ENCODE measurements at regions of chr6 and their contacts with region 1.

Region 1: GRCh38 chr6:38493931-38494547 is 145.7 kb downstream of the BTBD9 start:
- DNase-seq: peak; percentile 52
- ATAC-seq: peak; percentile 69
- H3K4me3 ChIP-seq: no peak overlapping the region
- H3K27ac ChIP-seq: no peak overlapping the region
- H3K4me1 ChIP-seq: 0 out of 2 replicates have a peak, but pooled peaks cover 9% of the 10 kb centered on the region
- H3K27me3 ChIP-seq: no peaks in the 10 kb centered on the region
- CTCF ChIP-seq: peak; percentile 70 to 90 (median 74)
- EP300 ChIP-seq: no peak
- POLR2A ChIP-seq: no peak
- RAD21 ChIP-seq: peak; percentile 98

Region 2: DNA sequence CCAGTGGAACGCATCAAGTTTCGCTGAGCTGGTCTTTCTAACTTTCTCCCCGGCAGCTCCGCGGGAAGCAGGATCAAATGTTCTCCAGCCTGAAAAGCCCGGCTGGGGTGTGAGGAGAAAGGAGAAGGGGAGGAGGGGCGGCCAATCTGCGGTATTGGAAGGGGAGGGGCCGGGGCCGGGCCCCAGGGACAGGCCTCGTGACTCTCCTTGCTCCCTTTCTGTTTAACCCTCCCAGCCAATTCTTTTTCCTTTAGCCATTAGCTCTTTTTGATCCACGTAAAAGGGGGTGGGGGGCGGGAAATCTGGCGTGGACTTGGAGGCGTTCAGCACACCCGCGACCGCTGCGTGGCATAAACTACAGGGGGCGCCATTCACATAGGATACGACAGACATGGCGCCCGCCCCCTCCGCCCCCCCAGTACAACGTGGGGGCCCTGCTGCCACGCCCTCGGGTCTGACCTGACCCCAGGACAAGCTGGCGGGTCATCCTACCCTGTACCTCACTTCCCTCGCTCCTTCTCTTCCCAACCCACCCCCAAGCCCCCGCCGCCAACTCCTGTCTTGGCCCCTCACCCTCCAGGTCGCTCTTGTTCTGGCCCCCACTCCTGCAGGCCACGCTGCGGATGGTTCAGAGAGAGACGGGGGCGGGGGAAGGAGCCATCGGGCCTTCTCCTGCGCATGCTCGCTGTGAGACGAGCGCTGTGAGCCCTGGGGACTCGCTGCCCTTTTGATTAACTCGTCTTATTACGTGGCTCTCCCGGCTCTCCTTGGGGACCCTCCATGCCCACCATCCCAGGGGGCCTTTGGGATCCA is 788.6 kb before region 1 on chr6:
- CTCF ChIA-PET with region 1: interaction called, 22 read pairs
- POLR2A ChIA-PET with region 1: no interaction called
- RAD21 ChIA-PET with region 1: interaction called, 10 read pairs
- SMC1A ChIA-PET with region 1: interaction called, 4 read pairs
- in situ Hi-C with region 1: no loop called
- intact Hi-C with region 1: loop called (anchors 5 kb)
- DNase-seq: peak; percentile 30
- ATAC-seq: peak; percentile 94
- H3K4me3 ChIP-seq: peak overlapping the region; percentile 38
- H3K27ac ChIP-seq: no peak overlapping the region; the same call in 1 of the 2 replicates
- H3K4me1 ChIP-seq: peaks cover 5% of the 10 kb centered on the region
- H3K27me3 ChIP-seq: peaks cover 0 to 3% of the 10 kb centered on the region in 2 experiments; a peak in 1 of 4 replicates
- CTCF ChIP-seq: peak; percentile 73 to 77 (median 75)
- EP300 ChIP-seq: no peak
- POLR2A ChIP-seq: peak; percentile 40
- RAD21 ChIP-seq: peak; percentile 64

Region 3: DNA sequence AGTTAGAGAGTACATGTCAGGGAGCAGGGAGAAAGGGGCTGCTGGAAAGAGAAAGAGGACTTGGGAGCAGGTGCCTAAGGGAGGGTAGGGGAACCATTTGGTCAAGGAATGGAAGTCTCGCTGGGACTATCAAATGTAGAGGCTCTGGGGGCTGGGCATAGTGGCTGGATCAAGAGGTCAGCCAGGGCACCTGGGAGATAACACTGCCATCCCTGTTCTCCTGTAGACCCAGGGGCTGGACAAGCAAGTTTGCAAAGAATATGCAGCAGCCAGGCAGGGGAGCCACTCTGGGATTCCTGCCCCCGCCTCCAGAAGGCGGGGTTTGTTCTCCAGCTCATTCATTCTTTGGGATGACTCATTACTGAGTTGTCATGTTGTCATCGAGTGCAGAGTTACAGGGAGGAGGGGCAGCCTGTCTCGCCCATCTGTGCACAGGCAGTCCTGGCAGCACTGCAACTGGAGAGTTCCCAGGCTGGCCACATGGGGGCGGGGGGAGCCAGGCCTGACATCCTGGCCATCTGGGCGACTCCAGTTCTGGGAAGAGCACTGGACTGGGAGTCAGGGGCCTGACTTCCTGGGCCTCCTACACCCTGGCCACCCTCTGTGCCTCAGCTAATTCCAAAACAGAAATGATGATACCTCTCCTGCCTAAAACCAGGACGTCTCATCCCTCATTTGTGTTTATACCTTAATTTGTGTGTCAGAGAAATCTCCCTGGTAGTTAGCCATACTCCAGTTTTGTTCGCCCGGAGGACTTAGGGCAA is 702.7 kb before region 1 on chr6:
- CTCF ChIA-PET with region 1: interaction called, 11 read pairs
- POLR2A ChIA-PET with region 1: no interaction called
- RAD21 ChIA-PET with region 1: interaction called, 7 read pairs
- SMC1A ChIA-PET with region 1: interaction called, 3 read pairs
- in situ Hi-C with region 1: loop called (anchors 10 kb)
- intact Hi-C with region 1: loop called (anchors 5 kb)
- DNase-seq: peak; percentile 53
- ATAC-seq: peak; percentile 100
- H3K4me3 ChIP-seq: no peak overlapping the region
- H3K27ac ChIP-seq: no peak overlapping the region
- H3K4me1 ChIP-seq: no peaks in the 10 kb centered on the region
- H3K27me3 ChIP-seq: no peaks in the 10 kb centered on the region
- CTCF ChIP-seq: peak; percentile 92 to 98 (median 95)
- EP300 ChIP-seq: no peak
- POLR2A ChIP-seq: no peak
- RAD21 ChIP-seq: peak; percentile 89

Region 4: GRCh38 chr6:38034274-38034914 is 459.6 kb before region 1 on chr6:
- CTCF ChIA-PET with region 1: interaction called, 63 read pairs
- POLR2A ChIA-PET with region 1: no interaction called
- RAD21 ChIA-PET with region 1: interaction called, 31 read pairs
- SMC1A ChIA-PET with region 1: interaction called, 28 read pairs
- in situ Hi-C with region 1: loop called (anchors 5 kb)
- intact Hi-C with region 1: loop called (anchors 2 kb)
- DNase-seq: no peak
- ATAC-seq: peak; percentile 49; the same call in 2 of the 3 replicates
- H3K4me3 ChIP-seq: no peak overlapping the region
- H3K27ac ChIP-seq: no peak overlapping the region
- H3K4me1 ChIP-seq: peaks cover 12% of the 10 kb centered on the region; the same call in 1 of the 2 replicates
- H3K27me3 ChIP-seq: no peaks in the 10 kb centered on the region
- CTCF ChIP-seq: peak; percentile 26 to 49 (median 43); a peak in 4 of 6 replicates
- EP300 ChIP-seq: no peak
- POLR2A ChIP-seq: no peak
- RAD21 ChIP-seq: peak; percentile 54

Region 5: DNA sequence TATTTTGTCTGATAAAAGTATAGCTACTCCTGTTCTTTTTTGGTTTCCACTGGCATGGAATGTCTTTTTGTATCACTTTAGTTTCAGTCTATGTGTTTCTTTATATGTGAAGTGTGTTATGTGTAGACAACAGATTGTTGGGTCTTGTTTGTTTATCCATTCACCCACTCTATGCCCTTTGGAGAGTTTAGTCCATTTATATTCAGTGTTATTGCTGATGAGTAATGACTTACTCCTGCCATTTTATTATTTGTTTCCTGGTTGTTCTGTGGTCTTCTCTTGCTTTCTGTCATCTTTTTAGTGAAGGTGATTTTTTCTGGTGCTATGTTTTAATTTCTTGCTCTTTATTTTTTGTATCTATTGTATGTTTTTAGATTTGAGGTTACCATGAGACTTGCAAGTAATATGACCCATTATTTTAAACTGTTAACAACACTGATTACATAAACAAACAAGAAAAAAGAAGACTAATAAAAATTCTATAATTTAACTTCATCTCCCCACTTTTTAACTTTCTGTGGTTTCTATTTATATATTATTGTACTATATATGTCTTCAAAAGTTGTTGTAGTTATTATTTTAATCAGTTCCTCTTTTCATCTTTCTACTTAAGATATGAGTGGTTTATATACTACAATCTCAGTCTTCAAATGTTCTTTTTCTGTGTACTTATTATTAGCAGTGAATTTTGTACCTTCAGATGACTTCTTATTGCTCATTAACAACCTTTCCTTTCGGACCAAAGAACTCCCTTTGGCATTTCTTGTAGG is 177.8 kb before region 1 on chr6:
- CTCF ChIA-PET with region 1: interaction called, 3 read pairs
- POLR2A ChIA-PET with region 1: no interaction called
- RAD21 ChIA-PET with region 1: interaction called, 3 read pairs
- SMC1A ChIA-PET with region 1: no interaction called
- in situ Hi-C with region 1: no loop called
- intact Hi-C with region 1: loop called (anchors 5 kb)
- DNase-seq: no peak
- ATAC-seq: peak; percentile 81
- H3K4me3 ChIP-seq: peak overlapping the region; percentile 16; the same call in 1 of the 2 replicates
- H3K27ac ChIP-seq: peak overlapping the region; percentile 77
- H3K4me1 ChIP-seq: peaks cover 50% of the 10 kb centered on the region
- H3K27me3 ChIP-seq: no peaks in the 10 kb centered on the region
- CTCF ChIP-seq: no peak
- EP300 ChIP-seq: peak in 1 of 2 experiments; percentile 16; a peak in 1 of 4 replicates
- POLR2A ChIP-seq: no peak
- RAD21 ChIP-seq: no peak

Region 6: DNA sequence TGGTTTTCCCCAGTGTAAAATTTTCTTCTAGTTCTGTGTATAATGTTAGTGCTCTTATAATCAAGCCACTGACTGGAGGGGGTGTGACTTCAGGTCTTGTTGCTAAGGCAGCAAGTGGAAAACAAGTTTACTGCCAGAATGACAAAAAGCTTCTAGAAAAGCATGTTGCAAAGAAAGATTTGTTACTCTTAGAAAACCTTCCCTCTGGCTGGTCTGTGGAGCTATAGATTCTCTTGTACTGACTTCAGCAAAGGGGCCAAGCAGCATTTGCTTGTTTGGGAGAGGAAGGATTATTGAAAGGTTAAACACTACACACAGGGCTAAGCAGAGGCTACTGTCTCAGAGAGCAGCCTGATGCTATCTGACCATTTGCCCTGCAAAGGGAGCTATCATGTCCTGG is 143.1 kb before region 1 on chr6:
- CTCF ChIA-PET with region 1: no interaction called
- POLR2A ChIA-PET with region 1: no interaction called
- RAD21 ChIA-PET with region 1: no interaction called
- SMC1A ChIA-PET with region 1: no interaction called
- in situ Hi-C with region 1: no loop called
- intact Hi-C with region 1: no loop called
- DNase-seq: no peak
- ATAC-seq: no peak
- H3K4me3 ChIP-seq: no peak overlapping the region
- H3K27ac ChIP-seq: no peak overlapping the region
- H3K4me1 ChIP-seq: peaks cover 27% of the 10 kb centered on the region
- H3K27me3 ChIP-seq: no peaks in the 10 kb centered on the region
- CTCF ChIP-seq: no peak
- EP300 ChIP-seq: no peak
- POLR2A ChIP-seq: no peak
- RAD21 ChIP-seq: no peak

Region 7: DNA sequence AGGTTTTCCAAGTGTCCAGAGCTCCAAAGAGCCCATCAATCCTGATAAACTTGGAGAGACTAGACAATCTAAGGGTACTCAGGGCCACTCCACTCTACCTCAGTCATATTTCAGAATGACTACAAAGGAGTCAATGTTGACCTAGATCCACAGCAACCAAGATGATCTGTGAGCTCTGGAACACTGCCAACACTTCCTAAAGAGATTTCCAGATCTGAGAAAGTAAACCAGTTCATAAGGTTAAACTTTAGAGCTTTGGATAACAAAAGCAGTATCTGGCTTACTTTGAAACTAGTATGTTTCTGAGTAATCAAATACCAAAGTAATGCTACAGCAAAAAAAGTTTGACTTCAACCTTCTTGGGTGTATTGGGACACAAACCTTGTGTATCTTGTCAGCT is 23.0 kb after region 1 on chr6:
- CTCF ChIA-PET with region 1: interaction called, 6 read pairs
- POLR2A ChIA-PET with region 1: no interaction called
- RAD21 ChIA-PET with region 1: no interaction called
- SMC1A ChIA-PET with region 1: interaction called, 11 read pairs
- in situ Hi-C with region 1: no loop called
- intact Hi-C with region 1: no loop called
- DNase-seq: no peak
- ATAC-seq: no peak
- H3K4me3 ChIP-seq: no peak overlapping the region
- H3K27ac ChIP-seq: no peak overlapping the region
- H3K4me1 ChIP-seq: no peaks in the 10 kb centered on the region
- H3K27me3 ChIP-seq: no peaks in the 10 kb centered on the region
- CTCF ChIP-seq: no peak
- EP300 ChIP-seq: no peak
- POLR2A ChIP-seq: no peak
- RAD21 ChIP-seq: no peak

Region 8: GRCh38 chr6:38584731-38585130 is 90.7 kb after region 1 on chr6:
- CTCF ChIA-PET with region 1: no interaction called
- POLR2A ChIA-PET with region 1: no interaction called
- RAD21 ChIA-PET with region 1: no interaction called
- SMC1A ChIA-PET with region 1: no interaction called
- in situ Hi-C with region 1: no loop called
- intact Hi-C with region 1: no loop called
- DNase-seq: no peak
- ATAC-seq: no peak
- H3K4me3 ChIP-seq: no peak overlapping the region
- H3K27ac ChIP-seq: no peak overlapping the region
- H3K4me1 ChIP-seq: no peaks in the 10 kb centered on the region
- H3K27me3 ChIP-seq: no peaks in the 10 kb centered on the region
- CTCF ChIP-seq: no peak
- EP300 ChIP-seq: no peak
- POLR2A ChIP-seq: no peak
- RAD21 ChIP-seq: no peak

Region 9: GRCh38 chr6:38671885-38672467 is 177.9 kb after region 1 on chr6:
- CTCF ChIA-PET with region 1: interaction called, 4 read pairs
- POLR2A ChIA-PET with region 1: no interaction called
- RAD21 ChIA-PET with region 1: interaction called, 3 read pairs
- SMC1A ChIA-PET with region 1: interaction called, 5 read pairs
- in situ Hi-C with region 1: no loop called
- intact Hi-C with region 1: loop called (anchors 2 kb)
- DNase-seq: peak; percentile 55
- ATAC-seq: peak; percentile 91
- H3K4me3 ChIP-seq: no peak overlapping the region
- H3K27ac ChIP-seq: no peak overlapping the region
- H3K4me1 ChIP-seq: peaks cover 18% of the 10 kb centered on the region
- H3K27me3 ChIP-seq: no peaks in the 10 kb centered on the region
- CTCF ChIP-seq: peak; percentile 70 to 84 (median 81)
- EP300 ChIP-seq: no peak
- POLR2A ChIP-seq: no peak
- RAD21 ChIP-seq: peak; percentile 86

Measured in GM12878 (cell line).